Endothelial cell of umbilical vein (primary cell): ENCODE measurements at regions of chr17 and their contacts with region 1.

Region 1: GRCh38 chr17:4908301-4908700 is 5.4 kb upstream of the CHRNE start:
- DNase-seq: no peak
- H3K4me3 ChIP-seq: no peak overlapping the region
- H3K27ac ChIP-seq: no peak overlapping the region
- H3K4me1 ChIP-seq: no peaks in the 10 kb centered on the region
- H3K27me3 ChIP-seq: no peaks in the 10 kb centered on the region
- CTCF ChIP-seq: no peak
- POLR2A ChIP-seq: no peak

Region 2: GRCh38 chr17:4815043-4815675 is 93.1 kb before region 1 on chr17:
- CTCF ChIA-PET with region 1: no interaction called
- POLR2A ChIA-PET with region 1: no interaction called
- dilution Hi-C with region 1: no loop called
- intact Hi-C with region 1: no loop called
- DNase-seq: no peak
- H3K4me3 ChIP-seq: no peak overlapping the region
- H3K27ac ChIP-seq: no peak overlapping the region
- H3K4me1 ChIP-seq: no peaks in the 10 kb centered on the region
- H3K27me3 ChIP-seq: no peaks in the 10 kb centered on the region
- CTCF ChIP-seq: peak; percentile 42 to 54
- POLR2A ChIP-seq: no peak

Region 3: GRCh38 chr17:4920351-4921048 is 12.2 kb after region 1 on chr17:
- CTCF ChIA-PET with region 1: interaction called, 24 read pairs
- POLR2A ChIA-PET with region 1: no interaction called
- dilution Hi-C with region 1: no loop called
- intact Hi-C with region 1: no loop called
- DNase-seq: no peak
- H3K4me3 ChIP-seq: no peak overlapping the region
- H3K27ac ChIP-seq: no peak overlapping the region
- H3K4me1 ChIP-seq: no peaks in the 10 kb centered on the region
- H3K27me3 ChIP-seq: no peaks in the 10 kb centered on the region
- CTCF ChIP-seq: no peak
- POLR2A ChIP-seq: no peak

Region 4: DNA sequence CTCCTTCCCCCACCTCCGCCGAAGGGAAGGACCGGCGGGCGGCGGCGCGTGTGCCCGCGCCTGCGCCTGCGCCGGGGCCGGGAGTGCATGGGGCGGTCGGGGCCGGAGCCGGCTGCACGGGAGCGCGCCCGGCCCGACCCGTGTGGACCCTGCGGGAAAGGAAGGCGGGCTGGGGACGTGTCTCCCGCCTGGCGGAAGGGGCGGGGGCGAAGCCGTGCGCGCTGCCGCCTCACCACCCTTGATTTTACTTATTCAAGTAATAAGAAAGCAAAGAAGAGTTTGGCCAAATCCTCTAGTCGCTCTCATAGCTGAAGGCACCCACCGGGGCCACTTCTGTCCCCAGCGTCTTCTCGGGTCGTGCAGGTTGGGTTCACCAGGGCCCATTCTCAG is 40.6 kb after region 1 on chr17:
- CTCF ChIA-PET with region 1: interaction called, 12 read pairs
- POLR2A ChIA-PET with region 1: no interaction called
- dilution Hi-C with region 1: no loop called
- intact Hi-C with region 1: loop called (anchors 2 kb)
- DNase-seq: peak; percentile 88
- H3K4me3 ChIP-seq: peak overlapping the region; percentile 81 to 99 (median 95)
- H3K27ac ChIP-seq: peak overlapping the region; percentile 90
- H3K4me1 ChIP-seq: peaks cover 44% of the 10 kb centered on the region
- H3K27me3 ChIP-seq: no peaks in the 10 kb centered on the region
- CTCF ChIP-seq: no peak
- POLR2A ChIP-seq: peak; percentile 51

Region 5: DNA sequence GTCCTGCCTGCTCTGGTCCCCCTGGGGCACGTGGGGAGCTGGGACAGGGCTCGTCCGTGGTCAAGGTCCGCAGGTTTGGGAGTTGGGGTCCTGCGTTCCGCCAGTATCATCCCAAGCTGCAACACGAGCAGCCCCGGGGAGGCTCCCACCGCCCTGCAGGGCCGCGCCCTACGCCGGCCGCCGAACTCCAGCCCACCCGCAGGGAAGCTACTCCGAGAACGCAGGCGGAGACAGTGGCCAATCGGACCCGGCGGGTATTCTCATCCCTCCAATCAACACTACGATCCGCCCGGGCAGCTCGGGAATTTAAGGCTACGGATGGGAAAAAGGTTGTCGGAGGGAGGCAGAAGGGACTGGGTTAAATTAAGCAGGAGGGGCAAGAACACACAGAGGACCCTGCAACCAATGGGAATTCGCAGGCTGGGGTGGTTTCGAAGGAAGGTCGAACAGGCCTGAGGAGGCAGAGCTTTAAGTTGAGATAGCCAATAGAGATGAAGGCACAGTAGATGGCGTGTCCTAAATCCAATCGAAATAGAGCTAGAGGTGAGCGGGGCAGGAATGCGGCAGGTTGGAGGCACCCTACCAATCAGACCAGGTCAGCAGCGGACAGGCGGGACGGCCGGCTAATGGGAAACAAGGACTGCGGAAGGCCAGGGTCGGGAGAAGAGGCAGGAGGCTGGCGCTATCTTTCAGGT is 58.7 kb after region 1 on chr17:
- CTCF ChIA-PET with region 1: interaction called, 22 read pairs
- POLR2A ChIA-PET with region 1: interaction called, 6 read pairs
- dilution Hi-C with region 1: no loop called
- intact Hi-C with region 1: loop called (anchors 1 kb)
- DNase-seq: peak; percentile 100
- H3K4me3 ChIP-seq: peak overlapping the region; percentile 14 to 87 (median 63)
- H3K27ac ChIP-seq: peak overlapping the region; percentile 69
- H3K4me1 ChIP-seq: peaks cover 24% of the 10 kb centered on the region
- H3K27me3 ChIP-seq: no peaks in the 10 kb centered on the region
- CTCF ChIP-seq: no peak
- POLR2A ChIP-seq: no peak

Region 6: DNA sequence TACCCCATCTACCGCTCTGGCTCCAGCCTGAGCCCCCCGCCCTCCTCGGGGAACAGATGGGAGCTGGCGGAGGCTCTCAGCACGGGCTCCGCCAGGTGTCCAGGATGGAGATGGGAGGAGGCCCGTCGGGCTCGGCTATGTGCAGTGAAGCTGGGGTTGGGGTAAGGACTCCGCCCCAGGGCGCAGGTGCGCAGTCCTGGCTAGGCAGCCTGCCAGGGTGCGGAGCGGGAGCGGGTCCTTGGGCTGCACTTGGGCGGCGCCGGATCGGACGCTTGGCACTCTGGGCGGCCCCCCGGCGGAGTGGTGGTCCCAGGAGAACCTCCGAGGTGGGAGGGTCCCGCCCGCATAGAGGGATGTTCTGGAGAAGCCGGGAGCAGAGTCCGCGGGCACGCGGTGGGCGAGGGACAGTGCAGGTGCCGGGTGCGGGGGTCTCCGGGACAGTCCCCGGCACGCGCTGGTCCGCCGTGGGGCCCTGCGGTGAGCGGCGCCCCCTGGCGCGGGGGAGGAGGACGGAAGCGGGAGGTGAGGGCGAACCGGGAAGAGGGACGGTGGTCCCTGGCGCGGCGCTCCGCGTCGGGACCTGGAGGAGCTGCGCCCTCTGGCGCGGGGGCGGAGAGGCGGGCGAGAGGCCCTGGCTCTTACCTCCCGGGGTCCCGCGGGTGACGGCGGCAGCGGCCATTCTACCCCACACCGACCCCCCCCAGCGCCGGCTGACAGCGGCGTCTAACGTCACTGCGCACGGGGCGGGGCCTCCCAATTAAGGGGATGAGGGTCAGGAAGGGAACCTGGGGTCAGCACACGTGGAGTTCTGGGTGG is 78.9 kb after region 1 on chr17 and contains the start of gene CAMTA2:
- CTCF ChIA-PET with region 1: interaction called, 50 read pairs
- POLR2A ChIA-PET with region 1: no interaction called
- dilution Hi-C with region 1: no loop called
- intact Hi-C with region 1: loop called (anchors 1 kb)
- DNase-seq: peak; percentile 83
- H3K4me3 ChIP-seq: peak within 1 kb of the TSS; percentile 58 to 76 (median 60)
- H3K27ac ChIP-seq: peak within 1 kb of the TSS; percentile 66
- H3K4me1 ChIP-seq: peaks cover 24% of the 10 kb centered on the region
- H3K27me3 ChIP-seq: no peaks in the 10 kb centered on the region
- CTCF ChIP-seq: peak; percentile 64 to 81
- POLR2A ChIP-seq: peak; percentile 70
- total RNA-seq, gene CAMTA2: 51.0 and 56.7 TPM in 2 replicates

Region 7: DNA sequence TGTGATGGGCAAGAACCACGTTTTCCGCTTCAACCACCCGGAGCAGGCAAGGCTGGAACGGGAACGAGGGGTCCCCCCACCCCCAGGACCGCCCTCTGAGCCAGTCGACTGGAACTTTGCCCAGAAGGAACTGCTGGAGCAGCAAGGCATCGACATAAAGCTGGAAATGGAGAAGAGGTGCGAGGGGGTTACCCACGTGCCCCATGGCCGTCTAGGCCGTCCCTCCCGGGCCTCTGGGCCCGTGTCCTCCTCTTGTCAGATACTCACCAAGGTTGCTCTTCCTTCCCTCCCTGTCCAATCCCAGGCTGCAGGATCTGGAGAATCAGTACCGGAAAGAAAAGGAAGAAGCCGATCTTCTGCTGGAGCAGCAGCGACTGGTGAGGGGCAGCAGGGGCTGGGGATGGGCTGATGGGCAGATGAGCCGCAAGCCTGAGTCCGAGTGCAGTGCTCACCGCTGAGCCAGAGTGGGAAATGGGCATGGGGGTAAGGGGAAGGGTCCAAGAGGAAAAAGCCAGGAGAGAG is 112.3 kb after region 1 on chr17:
- CTCF ChIA-PET with region 1: interaction called, 6 read pairs
- POLR2A ChIA-PET with region 1: interaction called, 10 read pairs
- dilution Hi-C with region 1: no loop called
- intact Hi-C with region 1: no loop called
- DNase-seq: no peak
- H3K4me3 ChIP-seq: no peak overlapping the region
- H3K27ac ChIP-seq: no peak overlapping the region
- H3K4me1 ChIP-seq: no peaks in the 10 kb centered on the region
- H3K27me3 ChIP-seq: no peaks in the 10 kb centered on the region
- CTCF ChIP-seq: no peak
- POLR2A ChIP-seq: no peak